Mammary epithelial cell (primary cell): ENCODE measurements at regions of chrX and their contacts with region 1.

Region 1: DNA sequence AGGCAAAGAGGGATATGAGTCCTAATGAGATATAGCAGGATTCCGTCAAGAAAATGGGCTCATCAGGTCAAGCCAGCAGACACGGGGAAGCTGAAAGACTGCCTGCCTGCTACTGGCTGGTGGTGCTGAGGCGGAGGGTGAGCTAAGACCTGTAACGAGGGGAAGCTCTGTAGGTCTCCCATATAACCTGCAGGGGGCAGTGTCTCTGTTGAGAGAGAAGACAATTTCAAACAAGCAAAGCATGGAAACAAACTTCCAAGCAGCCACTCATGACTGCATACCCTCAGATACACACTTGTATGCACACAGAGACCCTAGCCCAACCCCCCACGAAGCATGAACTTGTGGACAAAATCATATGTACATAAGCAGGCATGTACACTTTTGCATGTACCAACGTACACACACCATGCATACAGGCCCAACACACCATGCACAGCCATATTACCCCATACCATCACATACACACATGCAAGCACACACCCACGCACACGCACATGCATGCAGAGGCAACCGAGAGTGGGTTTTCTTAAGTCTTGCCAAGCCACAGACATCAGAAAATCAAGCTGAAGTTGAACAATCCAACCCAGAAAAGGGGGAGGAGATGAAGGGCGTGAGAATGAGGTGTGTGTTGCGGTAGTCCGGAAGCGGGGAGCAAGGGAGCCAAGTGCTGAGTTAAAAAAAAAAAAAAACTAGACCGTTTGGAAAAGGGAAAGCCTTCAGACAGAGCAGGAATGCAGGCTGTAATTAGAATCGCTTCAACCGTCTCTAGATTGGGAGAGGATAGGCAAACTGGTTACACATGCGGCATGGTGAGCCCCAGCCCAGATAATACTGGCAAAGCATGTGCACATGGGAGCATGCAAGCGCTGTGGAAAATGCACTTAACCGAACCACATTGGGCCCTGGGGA is 71.0 kb downstream of the PJA1 start:
- DNase-seq: peak; percentile 26
- H3K4me3 ChIP-seq: no peak overlapping the region
- H3K27ac ChIP-seq: no peak overlapping the region
- H3K4me1 ChIP-seq: no peaks in the 10 kb centered on the region
- H3K27me3 ChIP-seq: no peaks in the 10 kb centered on the region
- CTCF ChIP-seq: peak; percentile 54 to 56

Region 2: GRCh38 chrX:69133921-69134542 is 39.8 kb after region 1 on chrX:
- CTCF ChIA-PET with region 1: no interaction called
- dilution Hi-C with region 1: no loop called
- in situ Hi-C with region 1: no loop called
- intact Hi-C with region 1: loop called (anchors 1 kb)
- DNase-seq: peak; percentile 61
- H3K4me3 ChIP-seq: no peak overlapping the region
- H3K27ac ChIP-seq: no peak overlapping the region
- H3K4me1 ChIP-seq: no peaks in the 10 kb centered on the region
- H3K27me3 ChIP-seq: no peaks in the 10 kb centered on the region
- CTCF ChIP-seq: peak; percentile 58 to 71

Region 3: GRCh38 chrX:69165087-69165651 is 71.0 kb after region 1 on chrX and contains the start of gene PJA1:
- CTCF ChIA-PET with region 1: no interaction called
- dilution Hi-C with region 1: no loop called
- in situ Hi-C with region 1: no loop called
- intact Hi-C with region 1: loop called (anchors 1 kb)
- DNase-seq: peak; percentile 54
- H3K4me3 ChIP-seq: peak within 1 kb of the TSS; percentile 69 to 85 (median 79)
- H3K27ac ChIP-seq: peak within 1 kb of the TSS; percentile 54
- H3K4me1 ChIP-seq: peaks cover 7% of the 10 kb centered on the region
- H3K27me3 ChIP-seq: no peaks in the 10 kb centered on the region
- CTCF ChIP-seq: no peak
- total RNA-seq, gene PJA1: 21.2 to 32.9 TPM

Region 4: GRCh38 chrX:69210581-69210980 is 116.4 kb after region 1 on chrX:
- CTCF ChIA-PET with region 1: no interaction called
- dilution Hi-C with region 1: no loop called
- in situ Hi-C with region 1: no loop called
- intact Hi-C with region 1: no loop called
- DNase-seq: peak; percentile 2
- H3K4me3 ChIP-seq: no peak overlapping the region
- H3K27ac ChIP-seq: no peak overlapping the region
- H3K4me1 ChIP-seq: no peaks in the 10 kb centered on the region
- H3K27me3 ChIP-seq: no peaks in the 10 kb centered on the region
- CTCF ChIP-seq: no peak